HepG2 (cell line): ENCODE measurements at regions of chr4 and their contacts with region 1.

Region 1: GRCh38 chr4:141220655-141221605 is at the start of gene ZNF330:
- DNase-seq: peak; percentile 68
- ATAC-seq: peak; percentile 95
- H3K4me3 ChIP-seq: peak within 1 kb of the TSS; percentile 91 to 98 (median 96)
- H3K27ac ChIP-seq: peak within 1 kb of the TSS; percentile 78
- H3K4me1 ChIP-seq: peaks cover 26% of the 10 kb centered on the region
- H3K27me3 ChIP-seq: no peaks in the 10 kb centered on the region; a peak in 2 of 5 replicates
- CTCF ChIP-seq: peak; percentile 46
- EP300 ChIP-seq: no peak
- POLR2A ChIP-seq: peak; percentile 70 to 96
- RAD21 ChIP-seq: no peak
- total RNA-seq, gene ZNF330: 43.4 and 61.1 TPM in 2 replicates

Region 2: GRCh38 chr4:141301216-141301615 is 80.3 kb after region 1 on chr4:
- CTCF ChIA-PET with region 1: no interaction called
- POLR2A ChIA-PET with region 1: no interaction called
- in situ Hi-C with region 1: no loop called
- intact Hi-C with region 1: no loop called
- DNase-seq: no peak
- ATAC-seq: no peak
- H3K4me3 ChIP-seq: no peak overlapping the region
- H3K27ac ChIP-seq: no peak overlapping the region
- H3K4me1 ChIP-seq: no peaks in the 10 kb centered on the region
- H3K27me3 ChIP-seq: no peaks in the 10 kb centered on the region
- CTCF ChIP-seq: no peak
- EP300 ChIP-seq: no peak
- POLR2A ChIP-seq: no peak
- RAD21 ChIP-seq: no peak

Region 3: DNA sequence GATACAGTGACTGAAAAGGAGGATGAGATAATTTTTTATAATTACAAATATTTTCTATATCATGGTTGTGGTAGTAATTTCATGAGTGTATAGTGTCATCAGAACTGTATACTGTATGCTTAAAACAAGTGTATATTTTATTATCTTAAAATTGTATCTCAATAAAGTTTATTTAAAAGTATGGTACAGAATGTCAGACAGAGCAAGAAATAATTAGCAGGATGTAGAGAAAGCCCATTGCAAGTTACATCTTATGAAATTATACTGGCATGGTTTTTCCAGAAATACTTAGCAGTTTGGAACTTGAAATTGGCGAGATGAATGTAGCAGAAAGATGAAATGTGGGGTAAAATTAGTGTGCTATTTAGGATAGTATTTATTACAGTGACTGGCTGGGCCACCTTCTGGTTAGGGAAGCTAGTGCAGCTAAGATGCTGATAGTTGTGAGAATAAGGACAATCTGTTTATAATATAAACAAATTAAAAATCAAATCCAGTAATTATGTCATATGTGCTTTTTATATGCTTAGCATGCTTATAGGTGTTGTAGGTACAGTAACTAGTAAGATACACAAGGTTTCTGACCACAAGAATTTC is 490.2 kb after region 1 on chr4:
- CTCF ChIA-PET with region 1: no interaction called
- POLR2A ChIA-PET with region 1: no interaction called
- in situ Hi-C with region 1: no loop called
- intact Hi-C with region 1: no loop called
- DNase-seq: no peak
- ATAC-seq: 0 out of 3 replicates have a peak, but pooled peaks have one; percentile 38
- H3K4me3 ChIP-seq: no peak overlapping the region
- H3K27ac ChIP-seq: no peak overlapping the region
- H3K4me1 ChIP-seq: no peaks in the 10 kb centered on the region
- H3K27me3 ChIP-seq: no peaks in the 10 kb centered on the region
- CTCF ChIP-seq: 0 out of 2 replicates have a peak, but pooled peaks have one; percentile 20
- EP300 ChIP-seq: no peak
- POLR2A ChIP-seq: no peak
- RAD21 ChIP-seq: no peak

Region 4: DNA sequence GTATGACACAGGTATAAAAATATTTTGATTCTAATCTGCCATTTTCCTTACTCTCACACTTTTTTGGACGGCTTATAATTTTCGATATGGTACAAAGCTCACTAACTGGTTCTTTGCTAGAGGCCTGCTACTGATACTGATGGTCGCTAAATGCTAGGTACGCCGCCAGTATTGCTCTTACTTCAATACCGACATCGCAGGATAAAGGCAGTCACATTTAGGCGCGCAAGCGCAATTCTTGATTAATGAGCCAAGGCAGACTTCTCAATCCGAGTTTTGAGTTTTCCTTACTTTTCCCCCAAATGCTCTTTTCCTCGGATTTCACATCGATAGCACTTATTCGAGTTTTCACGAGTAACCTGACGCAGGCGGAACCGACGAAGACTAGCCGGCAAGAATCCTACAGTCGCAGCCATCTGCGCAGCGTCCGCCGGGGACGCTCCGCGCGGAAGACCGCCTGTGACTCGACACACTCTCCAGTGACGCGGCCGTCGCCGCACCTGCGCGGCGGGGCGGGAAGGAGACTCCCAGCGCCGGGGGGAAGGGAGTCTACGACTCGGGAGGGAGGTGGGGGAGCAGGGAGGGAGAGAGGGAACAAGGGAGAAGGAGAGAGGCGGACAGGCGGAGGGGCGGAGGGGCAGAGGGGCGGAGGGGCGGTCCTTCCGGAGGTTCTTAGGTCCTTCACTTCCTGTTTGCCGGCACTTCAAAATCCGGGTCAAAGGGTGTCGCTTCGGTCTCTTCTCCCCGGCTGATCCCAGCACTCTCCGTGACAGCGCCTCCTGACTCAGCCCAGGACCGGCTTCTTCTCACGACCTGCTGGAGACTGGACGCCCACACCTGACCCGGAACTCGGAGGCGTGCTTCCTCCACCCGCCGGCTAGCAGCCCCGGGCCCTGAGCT is 1963.5 kb after region 1 on chr4 and contains the start of gene USP38:
- CTCF ChIA-PET with region 1: no interaction called
- POLR2A ChIA-PET with region 1: no interaction called
- in situ Hi-C with region 1: no loop called
- intact Hi-C with region 1: loop called (anchors 10 kb)
- DNase-seq: peak; percentile 91
- ATAC-seq: peak; percentile 94
- H3K4me3 ChIP-seq: peak within 1 kb of the TSS; percentile 83 to 100 (median 96)
- H3K27ac ChIP-seq: peak within 1 kb of the TSS; percentile 88
- H3K4me1 ChIP-seq: peaks cover 31% of the 10 kb centered on the region
- H3K27me3 ChIP-seq: no peaks in the 10 kb centered on the region; a peak in 1 of 5 replicates
- CTCF ChIP-seq: no peak; the same call in 1 of the 2 replicates
- EP300 ChIP-seq: no peak; a peak in 1 of 4 replicates
- POLR2A ChIP-seq: peak; percentile 82 to 93
- RAD21 ChIP-seq: no peak
- total RNA-seq, gene USP38: 11.8 and 15.5 TPM in 2 replicates